ENCODE measurements at regions of chr4 and their contacts with region 1.

Region 1: GRCh38 chr4:108166441-108167315 is 2.1 kb downstream of the LEF1 start:
- DNase-seq: peak; percentile 34 to 83 (median 60)
- ATAC-seq: peak; percentile 18
- H3K4me3 ChIP-seq: peak overlapping the region; percentile 76
- H3K4me3 Mint-ChIP-seq: peak overlapping the region; percentile 99
- H3K27ac ChIP-seq: peak overlapping the region; percentile 53 to 80
- H3K27ac Mint-ChIP-seq: peak overlapping the region; percentile 88
- H3K4me1 ChIP-seq: peaks cover 45% of the 10 kb centered on the region
- H3K4me1 Mint-ChIP-seq: peaks cover 45% of the 10 kb centered on the region
- H3K27me3 ChIP-seq: peaks cover 7 to 11% of the 10 kb centered on the region in 2 experiments
- H3K27me3 Mint-ChIP-seq: peaks cover 9% of the 10 kb centered on the region
- CTCF ChIP-seq: no peak

Region 2: DNA sequence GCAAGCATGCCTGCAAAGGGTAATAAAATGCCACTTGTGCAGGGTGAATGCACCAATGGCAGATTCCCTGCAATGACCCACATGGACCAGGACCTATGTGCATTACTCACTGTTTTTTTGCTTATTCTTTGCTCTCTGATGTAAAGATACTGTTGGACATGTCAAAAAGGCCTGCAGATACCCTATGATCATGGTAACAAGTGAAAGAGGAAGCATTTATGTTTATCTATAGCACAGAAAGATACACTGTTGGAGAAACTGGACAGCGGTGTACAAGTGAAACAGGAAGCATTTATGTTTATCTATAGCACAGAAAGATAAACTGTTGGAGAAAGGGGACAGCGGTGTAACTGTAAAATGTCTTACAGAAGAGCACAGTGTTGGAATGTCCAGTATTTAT is 574.2 kb before region 1 on chr4:
- CTCF ChIA-PET with region 1: no interaction called
- POLR2A ChIA-PET with region 1: no interaction called
- intact Hi-C with region 1: no loop called
- DNase-seq: no peak
- ATAC-seq: no peak
- H3K4me3 ChIP-seq: no peak overlapping the region
- H3K4me3 Mint-ChIP-seq: no peak overlapping the region
- H3K27ac ChIP-seq: no peak overlapping the region
- H3K27ac Mint-ChIP-seq: no peak overlapping the region
- H3K4me1 ChIP-seq: no peaks in the 10 kb centered on the region
- H3K4me1 Mint-ChIP-seq: no peaks in the 10 kb centered on the region
- H3K27me3 ChIP-seq: no peaks in the 10 kb centered on the region
- H3K27me3 Mint-ChIP-seq: peaks cover 11% of the 10 kb centered on the region
- CTCF ChIP-seq: no peak

Region 3: DNA sequence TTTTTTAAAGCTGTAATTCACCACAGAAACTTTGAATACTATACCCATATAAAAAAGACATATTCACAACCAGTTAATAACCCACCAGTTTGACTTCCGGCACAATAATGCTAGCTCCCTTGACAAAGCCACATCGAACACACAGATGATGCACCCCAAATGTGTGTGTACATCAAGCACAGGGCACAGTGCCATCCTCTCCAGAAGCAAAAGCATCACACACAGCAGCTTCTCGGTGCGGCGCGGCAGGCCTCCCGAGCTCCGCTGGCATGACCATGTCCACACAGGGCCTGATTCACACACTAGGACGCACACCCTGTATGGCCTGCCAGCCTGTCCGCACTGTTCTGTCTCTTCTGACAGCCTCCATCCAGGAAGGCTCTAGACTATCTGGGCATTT is 85.9 kb before region 1 on chr4:
- CTCF ChIA-PET with region 1: interaction called, 3 read pairs
- POLR2A ChIA-PET with region 1: interaction called, 13 read pairs
- intact Hi-C with region 1: no loop called
- DNase-seq: peak; percentile 35 to 77 (median 62)
- ATAC-seq: peak; percentile 84
- H3K4me3 ChIP-seq: no peak overlapping the region
- H3K4me3 Mint-ChIP-seq: peak overlapping the region; percentile 77
- H3K27ac ChIP-seq: peak overlapping the region in 1 of 2 donors; percentile 68
- H3K27ac Mint-ChIP-seq: peak overlapping the region; percentile 95
- H3K4me1 ChIP-seq: peaks cover 14% of the 10 kb centered on the region
- H3K4me1 Mint-ChIP-seq: peaks cover 78% of the 10 kb centered on the region
- H3K27me3 ChIP-seq: no peaks in the 10 kb centered on the region
- H3K27me3 Mint-ChIP-seq: no peaks in the 10 kb centered on the region
- CTCF ChIP-seq: no peak

Region 4: DNA sequence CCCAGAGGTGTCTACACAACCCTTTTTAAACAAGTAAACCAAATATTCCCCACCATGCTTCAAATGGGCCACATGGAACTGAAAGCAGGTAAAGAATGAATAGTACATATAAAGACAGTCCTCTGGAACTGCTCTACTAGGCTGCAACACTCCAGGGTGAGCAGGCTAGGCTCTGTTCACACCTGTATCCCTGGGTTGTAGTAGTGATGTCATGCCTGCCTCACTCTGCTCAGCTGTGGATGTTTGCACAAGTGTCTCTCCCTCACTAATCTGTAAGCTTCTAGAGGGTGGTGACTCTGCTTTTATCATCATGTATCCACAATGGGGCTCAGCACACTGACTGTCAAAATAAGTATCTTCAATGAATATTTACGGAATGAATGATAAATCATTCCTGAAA is 18.4 kb before region 1 on chr4:
- CTCF ChIA-PET with region 1: interaction called, 7 read pairs
- POLR2A ChIA-PET with region 1: interaction called, 229 read pairs
- intact Hi-C with region 1: loop called (anchors 2 kb)
- DNase-seq: peak in 6 of 14 experiments; percentile 28 to 64 (median 59)
- ATAC-seq: peak; percentile 76
- H3K4me3 ChIP-seq: no peak overlapping the region
- H3K4me3 Mint-ChIP-seq: peak overlapping the region; percentile 45
- H3K27ac ChIP-seq: peak overlapping the region; percentile 4 to 73
- H3K27ac Mint-ChIP-seq: peak overlapping the region; percentile 98
- H3K4me1 ChIP-seq: peaks cover 49% of the 10 kb centered on the region
- H3K4me1 Mint-ChIP-seq: peaks cover 93% of the 10 kb centered on the region
- H3K27me3 ChIP-seq: no peaks in the 10 kb centered on the region
- H3K27me3 Mint-ChIP-seq: no peaks in the 10 kb centered on the region
- CTCF ChIP-seq: no peak

Region 5: GRCh38 chr4:108155373-108155772 is 11.3 kb before region 1 on chr4:
- CTCF ChIA-PET with region 1: interaction called, 7 read pairs
- POLR2A ChIA-PET with region 1: interaction called, 148 read pairs
- intact Hi-C with region 1: loop called (anchors 1 to 2 kb)
- DNase-seq: peak in 6 of 14 experiments; percentile 40 to 79 (median 56)
- ATAC-seq: peak; percentile 62
- H3K4me3 ChIP-seq: peak overlapping the region; percentile 24
- H3K4me3 Mint-ChIP-seq: peak overlapping the region; percentile 87
- H3K27ac ChIP-seq: peak overlapping the region; percentile 10 to 61
- H3K27ac Mint-ChIP-seq: peak overlapping the region; percentile 79
- H3K4me1 ChIP-seq: peaks cover 37% of the 10 kb centered on the region
- H3K4me1 Mint-ChIP-seq: peaks cover 89% of the 10 kb centered on the region
- H3K27me3 ChIP-seq: no peaks in the 10 kb centered on the region
- H3K27me3 Mint-ChIP-seq: no peaks in the 10 kb centered on the region
- CTCF ChIP-seq: peak; percentile 44